ENCODE measurements at regions of chr16 and their contacts with region 1.

Region 1: GRCh38 chr16:15055141-15056053 is 477 bp downstream of the NTAN1 start:
- DNase-seq: peak; percentile 69
- H3K4me3 ChIP-seq: peak overlapping the region; percentile 80 to 99 (median 88)
- H3K27ac ChIP-seq: peak overlapping the region; percentile 80 to 93 (median 90)
- H3K4me1 ChIP-seq: peaks cover 3 to 37% (median 23%) of the 10 kb centered on the region in 4 donors
- H3K27me3 ChIP-seq: no peaks in the 10 kb centered on the region
- CTCF ChIP-seq: peak in 1 of 5 experiments; percentile 7
- EP300 ChIP-seq: no peak
- POLR2A ChIP-seq: peak; percentile 9

Region 2: GRCh38 chr16:13315642-13316407 is 1739.6 kb before region 1 on chr16:
- in situ Hi-C with region 1: no loop called
- intact Hi-C with region 1: no loop called
- DNase-seq: no peak
- H3K4me3 ChIP-seq: no peak overlapping the region
- H3K27ac ChIP-seq: no peak overlapping the region
- H3K4me1 ChIP-seq: no peaks in the 10 kb centered on the region
- H3K27me3 ChIP-seq: no peaks in the 10 kb centered on the region
- CTCF ChIP-seq: no peak
- EP300 ChIP-seq: no peak
- POLR2A ChIP-seq: no peak

Region 3: DNA sequence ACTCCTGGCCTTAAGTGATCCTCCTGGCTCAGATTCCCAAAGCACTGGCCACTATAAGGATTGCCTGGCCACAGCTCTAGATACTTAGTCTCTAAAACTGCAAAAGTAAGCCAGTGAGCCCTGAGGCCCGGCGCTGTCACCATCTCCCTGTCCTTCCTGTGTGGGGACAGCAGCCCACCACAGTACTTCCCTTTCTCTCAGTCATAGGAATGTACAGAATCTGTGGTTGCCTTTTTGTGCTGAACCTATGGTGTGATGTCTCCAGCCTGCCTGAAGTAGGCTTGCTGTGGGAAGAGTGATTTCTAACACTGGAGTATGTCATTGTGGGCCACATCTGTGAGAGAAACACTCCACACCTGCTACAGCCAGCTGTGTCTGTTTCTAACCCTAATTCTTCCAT is 24.2 kb before region 1 on chr16:
- in situ Hi-C with region 1: no loop called
- intact Hi-C with region 1: loop called (anchors 2 kb)
- DNase-seq: peak; percentile 13
- H3K4me3 ChIP-seq: no peak overlapping the region
- H3K27ac ChIP-seq: no peak overlapping the region
- H3K4me1 ChIP-seq: no peaks in the 10 kb centered on the region
- H3K27me3 ChIP-seq: no peaks in the 10 kb centered on the region
- CTCF ChIP-seq: no peak
- EP300 ChIP-seq: no peak
- POLR2A ChIP-seq: no peak

Measured in transverse colon (tissue), 4 donors.